ENCODE measurements at regions of chr1 and their contacts with region 1.

Region 1: DNA sequence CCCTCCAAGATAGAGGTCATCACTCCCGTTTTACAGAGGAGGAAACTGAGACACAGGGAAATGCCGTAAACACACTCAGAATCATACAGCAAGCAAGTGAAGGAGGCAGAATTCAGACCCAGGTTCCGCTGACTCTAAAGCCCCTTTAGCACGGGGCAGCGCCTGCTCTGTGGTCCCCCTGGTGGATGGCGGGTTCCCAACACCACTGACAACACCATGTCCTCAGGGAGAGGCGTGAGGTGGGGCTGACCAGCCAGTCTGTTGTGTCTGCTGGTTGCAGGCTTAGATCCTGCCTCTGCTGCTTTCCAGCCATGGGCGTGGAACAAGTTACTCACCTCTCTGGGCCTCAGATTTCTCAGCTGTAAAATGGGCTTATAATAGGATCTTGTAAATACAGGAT is 617.3 kb downstream of the MATN1 start:
- DNase-seq: peak in 1 of 4 donors; percentile 67
- ATAC-seq: peak; percentile 70
- H3K4me3 ChIP-seq: no peak overlapping the region
- H3K27ac ChIP-seq: no peak overlapping the region
- H3K4me1 ChIP-seq: no peaks in the 10 kb centered on the region
- H3K27me3 ChIP-seq: peaks cover 4 to 73% of the 10 kb centered on the region in 2 donors
- CTCF ChIP-seq: peak; percentile 35 to 51

Region 2: GRCh38 chr1:29789227-29789909 is 316.8 kb before region 1 on chr1:
- intact Hi-C with region 1: loop called in 1 of 2 experiments (anchors 10 kb)
- DNase-seq: no peak
- ATAC-seq: no peak
- H3K4me3 ChIP-seq: no peak overlapping the region
- H3K27ac ChIP-seq: no peak overlapping the region
- H3K4me1 ChIP-seq: no peaks in the 10 kb centered on the region
- H3K27me3 ChIP-seq: peaks cover 0 to 55% of the 10 kb centered on the region in 2 donors
- CTCF ChIP-seq: no peak